ENCODE measurements at regions of chr7 and their contacts with region 1.

Region 1: GRCh38 chr7:55887821-55888247 is 578 bp downstream of the ZNF713 start:
- DNase-seq: no peak
- ATAC-seq: no peak
- H3K4me3 ChIP-seq: peak overlapping the region; percentile 55 to 61
- H3K27ac ChIP-seq: peak overlapping the region; percentile 84
- H3K4me1 ChIP-seq: 0 out of 2 replicates have a peak, but pooled peaks cover 3% of the 10 kb centered on the region
- H3K27me3 ChIP-seq: no peaks in the 10 kb centered on the region
- CTCF ChIP-seq: no peak

Region 2: GRCh38 chr7:55928006-55928767 is 40.4 kb after region 1 on chr7:
- CTCF ChIA-PET with region 1: no interaction called
- POLR2A ChIA-PET with region 1: interaction called, 11 read pairs
- in situ Hi-C with region 1: no loop called
- intact Hi-C with region 1: no loop called
- DNase-seq: no peak
- ATAC-seq: no peak
- H3K4me3 ChIP-seq: no peak overlapping the region
- H3K27ac ChIP-seq: no peak overlapping the region
- H3K4me1 ChIP-seq: no peaks in the 10 kb centered on the region
- H3K27me3 ChIP-seq: no peaks in the 10 kb centered on the region
- CTCF ChIP-seq: no peak